PC-3 (cell line): ENCODE measurements at regions of chr3 and their contacts with region 1.

Region 1: DNA sequence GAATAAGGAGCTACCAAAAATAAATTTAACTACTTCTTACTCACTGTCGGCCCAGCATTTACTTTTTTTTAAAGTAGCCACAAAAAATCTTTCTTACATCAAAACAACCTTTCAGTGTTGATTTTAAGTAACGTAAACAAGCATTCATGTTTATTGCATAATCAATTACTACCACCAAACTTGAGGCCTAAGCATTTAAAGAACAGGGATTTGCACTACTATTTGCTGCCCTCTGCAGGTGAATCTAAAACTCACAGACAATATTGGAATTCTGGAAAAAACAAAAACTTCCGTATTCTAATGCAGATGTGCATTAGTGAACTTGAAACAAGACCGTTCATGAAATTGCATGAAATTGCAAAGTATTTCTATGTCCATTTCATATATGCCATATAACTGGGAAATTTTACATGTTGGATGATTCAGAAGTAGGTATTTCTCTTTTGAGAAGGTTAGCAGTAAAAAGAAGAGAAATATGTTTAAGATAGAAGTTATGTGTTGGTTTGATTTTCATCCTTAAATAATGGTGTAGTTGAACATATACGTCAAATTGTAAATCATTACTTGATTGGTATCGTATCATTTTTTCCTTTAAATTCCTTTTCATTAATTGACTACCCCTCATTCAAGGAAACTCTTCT is 55.6 kb downstream of the CGGBP1 start:
- DNase-seq: peak; percentile 77
- ATAC-seq: peak; percentile 45; the same call in 1 of the 2 replicates
- H3K4me3 ChIP-seq: no peak overlapping the region
- H3K27ac ChIP-seq: no peak overlapping the region
- H3K4me1 ChIP-seq: no peaks in the 10 kb centered on the region
- H3K27me3 ChIP-seq: no peaks in the 10 kb centered on the region
- CTCF ChIP-seq: peak; percentile 94

Region 2: DNA sequence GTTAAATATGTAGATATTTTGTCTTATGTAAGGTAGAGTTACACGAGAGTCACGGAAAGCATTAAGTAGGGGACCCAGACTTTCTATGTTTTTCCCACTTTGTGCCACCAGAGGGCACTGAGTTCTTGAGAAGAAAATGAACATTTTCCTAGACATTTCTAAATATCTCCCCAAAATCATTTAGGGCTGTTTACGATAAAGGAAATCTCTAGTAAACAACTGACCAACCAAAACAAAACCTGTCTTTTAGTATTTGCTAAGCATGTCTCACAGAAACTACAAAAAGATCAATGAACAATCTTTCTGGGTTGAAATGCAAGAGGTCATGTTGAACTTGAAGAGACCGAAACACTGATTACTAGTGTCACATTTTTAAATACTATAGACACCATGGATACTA is 743.0 kb before region 1 on chr3:
- CTCF ChIA-PET with region 1: interaction called, 5 read pairs
- POLR2A ChIA-PET with region 1: no interaction called
- intact Hi-C with region 1: loop called (anchors 1 kb)
- DNase-seq: peak; percentile 91
- ATAC-seq: peak; percentile 63
- H3K4me3 ChIP-seq: no peak overlapping the region
- H3K27ac ChIP-seq: no peak overlapping the region
- H3K4me1 ChIP-seq: peaks cover 20% of the 10 kb centered on the region
- H3K27me3 ChIP-seq: no peaks in the 10 kb centered on the region
- CTCF ChIP-seq: peak; percentile 89

Region 3: DNA sequence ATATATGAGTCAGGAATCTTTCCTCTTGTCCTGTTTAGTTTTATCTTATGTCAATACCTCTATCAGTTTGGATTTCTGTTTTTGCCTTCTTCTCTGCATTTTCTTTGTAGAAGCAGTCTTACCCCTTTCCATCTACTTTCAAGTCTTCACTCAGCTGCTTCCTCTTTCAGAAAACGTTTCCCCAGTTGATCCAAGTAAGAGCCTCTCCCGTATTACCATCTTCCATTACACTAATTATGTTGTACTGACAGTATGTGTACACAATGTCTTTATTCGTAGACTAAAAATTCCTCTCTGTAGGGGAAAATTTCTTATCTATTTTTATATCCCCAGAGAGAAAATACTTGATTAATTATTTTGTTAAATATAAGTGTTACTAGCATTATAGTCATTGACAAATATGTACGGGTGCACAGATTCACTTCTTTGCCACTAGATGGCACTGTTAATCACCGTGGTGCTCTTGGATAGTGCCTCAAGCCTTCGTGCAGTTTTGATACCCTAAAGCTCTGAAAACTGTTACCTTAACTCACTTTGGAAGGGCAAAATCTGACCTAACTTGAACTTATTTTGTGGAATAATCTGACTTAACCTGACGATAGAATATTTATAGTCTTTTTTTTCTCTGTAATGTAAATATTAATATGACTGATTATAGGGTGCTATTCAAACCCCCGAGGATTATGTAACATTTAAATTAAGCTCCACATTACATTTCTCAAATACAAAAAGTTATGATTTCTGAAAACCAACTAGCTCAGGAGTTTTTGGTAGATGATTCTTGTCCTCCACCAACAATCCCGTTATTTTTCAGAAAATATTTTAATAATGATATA is 652.7 kb before region 1 on chr3:
- CTCF ChIA-PET with region 1: interaction called, 6 read pairs
- POLR2A ChIA-PET with region 1: no interaction called
- intact Hi-C with region 1: loop called (anchors 1 kb)
- DNase-seq: peak; percentile 80
- ATAC-seq: peak; percentile 91
- H3K4me3 ChIP-seq: no peak overlapping the region
- H3K27ac ChIP-seq: no peak overlapping the region
- H3K4me1 ChIP-seq: peaks cover 18% of the 10 kb centered on the region; the same call in 1 of the 2 replicates
- H3K27me3 ChIP-seq: no peaks in the 10 kb centered on the region
- CTCF ChIP-seq: peak; percentile 95

Region 4: GRCh38 chr3:87581240-87581877 is 421.9 kb before region 1 on chr3:
- CTCF ChIA-PET with region 1: no interaction called
- POLR2A ChIA-PET with region 1: no interaction called
- intact Hi-C with region 1: loop called (anchors 10 kb)
- DNase-seq: no peak
- ATAC-seq: peak; percentile 88
- H3K4me3 ChIP-seq: no peak overlapping the region
- H3K27ac ChIP-seq: peak overlapping the region; percentile 54
- H3K4me1 ChIP-seq: peaks cover 17% of the 10 kb centered on the region
- H3K27me3 ChIP-seq: no peaks in the 10 kb centered on the region
- CTCF ChIP-seq: no peak

Region 5: DNA sequence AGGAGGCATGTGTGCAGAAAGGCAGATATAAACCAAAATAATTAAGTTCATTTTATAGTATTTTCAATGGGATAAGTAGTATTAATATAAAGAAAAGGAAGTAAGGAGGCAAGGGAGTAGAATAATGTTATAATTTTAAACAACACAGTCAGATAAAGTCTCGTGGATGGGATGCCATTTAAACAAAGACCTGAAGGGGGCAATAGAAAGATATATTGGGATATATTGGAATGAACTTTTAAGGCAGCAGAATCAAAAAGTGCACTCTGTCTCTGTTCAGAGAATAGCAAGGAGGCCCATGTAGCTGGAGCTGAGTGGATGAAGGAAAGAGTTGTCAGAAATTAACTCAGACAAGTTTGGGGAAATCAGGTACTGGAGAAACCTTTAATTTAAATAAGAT is 103.2 kb before region 1 on chr3:
- CTCF ChIA-PET with region 1: no interaction called
- POLR2A ChIA-PET with region 1: no interaction called
- intact Hi-C with region 1: loop called (anchors 2 kb)
- DNase-seq: peak; percentile 47
- ATAC-seq: peak; percentile 37; the same call in 1 of the 2 replicates
- H3K4me3 ChIP-seq: no peak overlapping the region
- H3K27ac ChIP-seq: no peak overlapping the region
- H3K4me1 ChIP-seq: no peaks in the 10 kb centered on the region
- H3K27me3 ChIP-seq: no peaks in the 10 kb centered on the region
- CTCF ChIP-seq: peak; percentile 55; the same call in 1 of the 2 replicates

Region 6: GRCh38 chr3:88180398-88180999 is 177.3 kb after region 1 on chr3:
- CTCF ChIA-PET with region 1: interaction called, 6 read pairs
- POLR2A ChIA-PET with region 1: no interaction called
- intact Hi-C with region 1: loop called (anchors 1 kb)
- DNase-seq: peak; percentile 69
- ATAC-seq: peak; percentile 76
- H3K4me3 ChIP-seq: no peak overlapping the region
- H3K27ac ChIP-seq: no peak overlapping the region
- H3K4me1 ChIP-seq: no peaks in the 10 kb centered on the region
- H3K27me3 ChIP-seq: no peaks in the 10 kb centered on the region
- CTCF ChIP-seq: peak; percentile 71